MCF 10A (cell line): ENCODE measurements at regions of chr1 and their contacts with region 1.

Region 1: DNA sequence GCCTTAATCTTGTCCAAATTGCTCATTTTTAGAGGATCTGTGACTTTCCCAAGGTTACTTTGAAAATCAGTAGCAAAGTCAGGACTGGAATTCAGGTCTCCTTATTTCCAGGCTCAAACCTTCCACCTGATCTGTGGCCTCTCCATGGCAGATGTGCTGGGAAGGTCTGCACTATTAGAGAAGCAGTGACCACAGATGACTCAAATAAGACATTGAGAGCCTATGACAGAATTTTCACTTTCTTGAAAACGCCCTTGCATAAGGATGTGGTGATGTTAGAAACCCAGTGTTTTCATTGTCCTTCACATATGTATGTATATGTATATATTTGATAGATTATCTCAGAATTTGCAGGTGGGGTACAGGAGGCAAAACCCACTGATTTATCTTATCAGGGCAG is 45.3 kb downstream of the TTC39A start:
- DNase-seq: no peak
- H3K4me3 Mint-ChIP-seq: no peak overlapping the region
- H3K27ac Mint-ChIP-seq: no peak overlapping the region
- H3K4me1 Mint-ChIP-seq: peaks cover 7% of the 10 kb centered on the region
- H3K27me3 Mint-ChIP-seq: no peaks in the 10 kb centered on the region
- CTCF ChIP-seq: no peak

Region 2: GRCh38 chr1:51264451-51264850 is 20.6 kb before region 1 on chr1:
- CTCF ChIA-PET with region 1: interaction called, 10 read pairs
- POLR2A ChIA-PET with region 1: interaction called, 8 read pairs
- intact Hi-C with region 1: no loop called
- DNase-seq: peak; percentile 63
- H3K4me3 Mint-ChIP-seq: no peak overlapping the region
- H3K27ac Mint-ChIP-seq: peak overlapping the region; percentile 37
- H3K4me1 Mint-ChIP-seq: peaks cover 57% of the 10 kb centered on the region
- H3K27me3 Mint-ChIP-seq: no peaks in the 10 kb centered on the region
- CTCF ChIP-seq: no peak

Region 3: GRCh38 chr1:51372561-51372960 is 87.5 kb after region 1 on chr1:
- CTCF ChIA-PET with region 1: no interaction called
- POLR2A ChIA-PET with region 1: no interaction called
- intact Hi-C with region 1: no loop called
- DNase-seq: no peak
- H3K4me3 Mint-ChIP-seq: no peak overlapping the region
- H3K27ac Mint-ChIP-seq: no peak overlapping the region
- H3K4me1 Mint-ChIP-seq: no peaks in the 10 kb centered on the region
- H3K27me3 Mint-ChIP-seq: no peaks in the 10 kb centered on the region
- CTCF ChIP-seq: no peak